ENCODE measurements at regions of chr18 and their contacts with region 1.

Region 1: GRCh38 chr18:3703732-3704176 is 253.8 kb downstream of the TGIF1 start:
- DNase-seq: peak; percentile 68 to 76
- H3K4me3 ChIP-seq: no peak overlapping the region
- H3K27ac ChIP-seq: no peak overlapping the region
- H3K4me1 ChIP-seq: peaks cover 8 to 13% of the 10 kb centered on the region in 2 donors
- H3K27me3 ChIP-seq: no peaks in the 10 kb centered on the region
- CTCF ChIP-seq: peak in 4 of 6 experiments; percentile 63 to 92 (median 70)
- POLR2A ChIP-seq: no peak

Region 2: DNA sequence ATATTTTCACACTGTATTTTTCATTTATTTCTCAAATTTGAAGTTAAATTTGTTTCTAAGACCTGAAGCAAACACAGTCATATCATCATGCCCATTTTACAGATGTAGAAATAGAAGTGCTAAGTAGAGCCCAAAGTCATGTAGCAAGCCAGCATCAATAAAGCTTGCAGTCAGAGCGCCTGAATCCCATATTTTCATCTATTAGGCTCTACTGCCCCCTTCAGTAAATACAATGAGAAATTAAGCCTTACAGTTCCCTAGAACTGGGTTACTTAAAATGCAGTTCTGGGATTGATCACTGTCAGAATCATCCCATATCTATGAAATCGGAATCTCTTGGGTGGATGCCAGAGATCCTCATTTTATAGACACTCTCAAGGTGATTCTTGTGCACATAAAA is 166.1 kb after region 1 on chr18:
- intact Hi-C with region 1: loop called (anchors 10 kb)
- DNase-seq: no peak
- H3K4me3 ChIP-seq: no peak overlapping the region
- H3K27ac ChIP-seq: no peak overlapping the region
- H3K4me1 ChIP-seq: peaks cover 13 to 23% of the 10 kb centered on the region in 2 donors
- H3K27me3 ChIP-seq: no peaks in the 10 kb centered on the region
- CTCF ChIP-seq: peak in 4 of 6 experiments; percentile 39 to 63 (median 55)
- POLR2A ChIP-seq: no peak

Region 3: GRCh38 chr18:3983351-3983969 is 279.7 kb after region 1 on chr18:
- intact Hi-C with region 1: no loop called
- DNase-seq: no peak
- H3K4me3 ChIP-seq: no peak overlapping the region
- H3K27ac ChIP-seq: no peak overlapping the region
- H3K4me1 ChIP-seq: no peaks in the 10 kb centered on the region
- H3K27me3 ChIP-seq: no peaks in the 10 kb centered on the region
- CTCF ChIP-seq: no peak
- POLR2A ChIP-seq: no peak

Region 4: DNA sequence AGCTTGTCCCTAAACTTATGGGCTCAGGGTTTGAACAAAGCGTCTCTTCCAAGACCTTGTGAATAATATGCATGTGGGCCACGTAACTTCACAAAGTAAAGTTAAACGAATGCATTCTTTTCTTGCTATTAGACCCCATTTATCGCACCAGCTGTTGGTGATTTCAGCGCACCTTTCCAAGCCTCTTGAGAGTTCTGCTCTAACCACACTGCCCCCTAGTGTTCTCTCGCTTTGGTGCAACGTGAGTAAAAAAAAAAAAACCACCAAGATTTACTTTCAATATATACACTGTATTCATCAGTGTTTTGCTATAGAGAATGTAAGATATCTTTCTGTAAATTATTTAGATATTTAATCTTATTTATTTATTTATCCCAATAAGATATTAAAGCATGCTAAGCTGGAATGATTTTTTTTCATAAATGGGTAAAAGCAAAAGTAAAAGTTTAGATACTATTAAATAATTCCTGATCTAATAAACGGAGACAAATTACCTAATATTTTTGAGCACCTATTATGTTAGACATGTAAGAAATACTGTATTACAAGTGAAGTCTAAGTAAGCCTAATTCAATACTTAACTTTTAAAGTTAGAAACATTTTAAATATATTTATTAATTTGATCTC is 291.8 kb after region 1 on chr18:
- intact Hi-C with region 1: loop called (anchors 10 kb)
- DNase-seq: peak; percentile 47 to 58
- H3K4me3 ChIP-seq: no peak overlapping the region
- H3K27ac ChIP-seq: no peak overlapping the region
- H3K4me1 ChIP-seq: no peaks in the 10 kb centered on the region
- H3K27me3 ChIP-seq: no peaks in the 10 kb centered on the region
- CTCF ChIP-seq: peak; percentile 58 to 81 (median 74)
- POLR2A ChIP-seq: no peak

Region 5: DNA sequence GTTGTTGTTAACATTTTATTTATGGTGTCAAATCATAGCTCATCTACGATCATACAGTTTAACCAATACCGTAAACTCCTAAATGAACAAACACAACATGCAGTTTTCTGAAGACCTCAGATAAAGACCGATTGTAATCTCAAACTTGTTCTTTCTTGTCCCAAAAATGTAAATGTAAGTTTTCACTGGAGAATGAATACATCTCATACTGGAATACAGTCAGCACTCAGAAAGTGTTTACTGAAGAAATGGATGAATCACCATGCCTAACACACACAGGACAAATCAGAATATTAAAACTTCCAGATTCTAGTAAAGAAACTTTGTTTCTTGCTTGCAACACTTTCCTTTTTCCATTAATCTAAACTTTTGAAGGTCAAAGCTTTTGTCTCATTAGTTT is 370.9 kb after region 1 on chr18:
- intact Hi-C with region 1: no loop called
- DNase-seq: no peak
- H3K4me3 ChIP-seq: no peak overlapping the region
- H3K27ac ChIP-seq: no peak overlapping the region
- H3K4me1 ChIP-seq: no peaks in the 10 kb centered on the region
- H3K27me3 ChIP-seq: no peaks in the 10 kb centered on the region
- CTCF ChIP-seq: no peak
- POLR2A ChIP-seq: no peak

Measured in thyroid gland (tissue), 4 donors.